Activated T-helper 1 cell treated with anti-CD3 and anti-CD28 coated beads, Interleukin-12 subunit alpha, Interleukin-12 subunit beta, Interleukin-2, Interleukin-4 antibody, amounts not matched to agents 30 ng/mL and 10 ng/mL and 1 ng/mL, durations not matched to agents 14 hours and 24 hours and 36 hours (primary cell): ENCODE measurements at regions of chr5 and their contacts with region 1.

Region 1: GRCh38 chr5:113606298-113607134 is 93.0 kb downstream of the YTHDC2 start:
- DNase-seq: peak; percentile 24
- H3K4me3 Mint-ChIP-seq: no peak overlapping the region
- H3K27ac Mint-ChIP-seq: no peak overlapping the region
- H3K4me1 Mint-ChIP-seq: peaks cover 4% of the 10 kb centered on the region
- H3K27me3 Mint-ChIP-seq: peaks cover 22% of the 10 kb centered on the region

Region 2: GRCh38 chr5:112691758-112692157 is 914.8 kb before region 1 on chr5:
- intact Hi-C with region 1: loop called (anchors 10 kb)
- DNase-seq: peak; percentile 13
- H3K4me3 Mint-ChIP-seq: no peak overlapping the region
- H3K27ac Mint-ChIP-seq: no peak overlapping the region
- H3K4me1 Mint-ChIP-seq: no peaks in the 10 kb centered on the region
- H3K27me3 Mint-ChIP-seq: peaks cover 36% of the 10 kb centered on the region

Region 3: DNA sequence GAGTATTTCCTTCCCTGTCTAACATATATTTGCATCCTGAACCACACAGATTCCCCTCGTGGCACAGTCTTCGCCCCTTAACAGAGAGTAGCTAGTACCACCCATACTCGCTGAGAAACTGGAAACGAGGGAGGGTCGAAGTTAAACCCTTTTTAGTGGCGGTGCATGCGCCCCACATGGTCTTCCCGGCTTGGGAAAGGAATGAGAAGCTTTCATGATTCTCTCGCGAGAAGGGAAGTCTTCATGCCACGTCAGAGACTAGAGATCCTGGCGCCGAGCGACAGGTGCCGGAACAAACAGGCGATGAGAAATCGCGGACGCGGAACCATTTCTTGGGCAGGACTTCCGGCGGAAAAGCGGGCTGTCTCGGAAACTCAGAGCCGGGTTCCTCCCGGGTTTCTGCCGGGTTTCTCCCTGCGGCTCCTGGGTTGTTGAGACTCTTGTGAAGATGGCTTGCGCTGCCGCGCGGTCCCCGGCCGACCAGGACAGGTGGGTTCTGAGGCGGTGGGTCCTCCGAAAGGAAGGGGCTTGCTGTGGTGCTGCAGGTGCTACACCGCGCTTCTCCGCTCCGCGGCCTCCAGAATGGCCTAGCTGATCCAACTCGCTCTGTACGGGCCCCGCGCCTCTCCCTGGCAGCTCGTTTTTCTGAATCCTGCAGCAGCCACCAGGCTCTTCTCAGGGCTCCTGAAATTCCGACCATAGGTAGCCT is 745.4 kb before region 1 on chr5 and contains the start of gene SRP19:
- intact Hi-C with region 1: loop called (anchors 10 kb)
- DNase-seq: peak; percentile 89
- H3K4me3 Mint-ChIP-seq: peak within 1 kb of the TSS; percentile 97
- H3K27ac Mint-ChIP-seq: peak within 1 kb of the TSS; percentile 96
- H3K4me1 Mint-ChIP-seq: peaks cover 27% of the 10 kb centered on the region
- H3K27me3 Mint-ChIP-seq: peaks cover 12% of the 10 kb centered on the region
- total RNA-seq, gene SRP19: 72.0 and 72.5 TPM in 2 replicates

Region 4: DNA sequence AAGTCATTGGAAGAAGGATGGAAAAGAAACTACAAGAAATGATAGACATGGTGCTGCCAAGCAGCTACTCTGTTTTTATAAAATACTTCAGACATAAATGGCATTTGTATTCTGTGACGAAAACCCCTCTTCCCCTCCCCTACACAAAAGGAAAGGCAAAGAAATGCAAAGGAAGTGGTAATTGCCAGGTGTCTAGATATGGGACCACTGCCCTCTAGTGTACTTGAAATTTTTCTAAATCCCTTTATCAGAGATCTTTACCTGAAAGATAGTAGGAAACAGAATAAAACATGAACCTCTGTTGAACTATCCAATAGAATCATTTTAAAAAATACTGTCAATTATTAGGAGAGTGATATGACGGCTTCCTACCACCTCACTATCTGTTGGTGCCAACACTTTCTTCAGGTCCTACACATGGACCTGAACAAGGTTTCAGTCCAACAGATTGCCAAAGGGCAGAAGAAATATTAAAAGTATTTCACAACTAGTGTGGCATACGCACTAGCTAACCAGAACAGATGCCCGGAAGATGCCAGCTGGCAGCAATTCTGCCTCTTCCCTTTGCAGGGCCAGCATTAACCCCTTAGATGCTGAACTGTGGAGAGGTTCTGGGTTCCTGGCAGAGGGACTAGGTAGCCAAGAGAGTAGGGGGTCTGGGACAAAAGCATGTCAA is 275.8 kb before region 1 on chr5:
- intact Hi-C with region 1: loop called (anchors 1 kb)
- DNase-seq: no peak
- H3K4me3 Mint-ChIP-seq: no peak overlapping the region
- H3K27ac Mint-ChIP-seq: no peak overlapping the region
- H3K4me1 Mint-ChIP-seq: peaks cover 14% of the 10 kb centered on the region
- H3K27me3 Mint-ChIP-seq: peaks cover 6% of the 10 kb centered on the region